AG04449 (cell line): ENCODE measurements at regions of chr11 and their contacts with region 1.

Region 1: GRCh38 chr11:75525596-75526541 is at the start of gene GDPD5:
- DNase-seq: no peak
- H3K4me3 ChIP-seq: peak within 1 kb of the TSS; percentile 80
- CTCF ChIP-seq: peak; percentile 62

Region 2: DNA sequence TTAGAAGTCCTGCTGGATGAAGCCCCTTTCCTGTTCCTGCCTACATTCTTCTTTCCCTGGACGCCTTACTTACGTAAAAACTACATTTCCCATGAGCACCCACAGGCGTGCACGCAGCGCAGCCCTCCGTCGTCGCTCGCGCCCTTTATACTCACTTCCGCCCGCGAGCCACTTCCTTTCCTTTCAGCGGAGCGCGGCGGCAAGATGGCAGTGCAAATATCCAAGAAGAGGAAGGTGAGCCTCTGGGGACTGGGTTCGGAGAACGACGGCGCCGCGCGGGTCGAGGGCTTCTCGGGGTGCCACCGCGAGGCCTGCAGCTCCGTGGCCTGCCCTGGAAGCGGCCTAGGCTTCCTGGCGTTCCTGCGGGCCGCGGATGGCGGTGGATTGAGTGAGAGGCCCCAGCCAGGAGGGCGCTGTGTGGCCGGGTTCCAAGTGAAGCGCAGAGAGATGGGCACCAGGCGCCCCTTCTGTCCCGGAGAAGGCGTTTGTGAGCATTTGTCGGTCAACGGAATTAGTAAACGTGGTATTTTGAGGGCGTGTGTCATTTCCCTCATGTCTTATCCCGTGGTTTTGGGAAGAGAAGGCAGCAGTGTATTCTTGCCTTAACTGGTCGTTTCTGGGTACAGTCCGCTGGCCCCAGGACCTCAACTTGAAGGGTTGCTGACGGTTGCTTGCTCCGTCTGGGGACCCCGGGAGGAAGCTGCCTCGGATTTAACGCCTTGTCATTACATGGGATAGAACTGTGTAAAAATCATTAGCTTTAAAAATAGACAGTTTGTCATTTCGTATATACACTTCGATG is 126.3 kb before region 1 on chr11 and contains the start of gene RPS3:
- CTCF ChIA-PET with region 1: interaction called, 122 read pairs
- POLR2A ChIA-PET with region 1: no interaction called
- DNase-seq: peak; percentile 50
- H3K4me3 ChIP-seq: peak within 1 kb of the TSS; percentile 97
- CTCF ChIP-seq: peak; percentile 6

Region 3: DNA sequence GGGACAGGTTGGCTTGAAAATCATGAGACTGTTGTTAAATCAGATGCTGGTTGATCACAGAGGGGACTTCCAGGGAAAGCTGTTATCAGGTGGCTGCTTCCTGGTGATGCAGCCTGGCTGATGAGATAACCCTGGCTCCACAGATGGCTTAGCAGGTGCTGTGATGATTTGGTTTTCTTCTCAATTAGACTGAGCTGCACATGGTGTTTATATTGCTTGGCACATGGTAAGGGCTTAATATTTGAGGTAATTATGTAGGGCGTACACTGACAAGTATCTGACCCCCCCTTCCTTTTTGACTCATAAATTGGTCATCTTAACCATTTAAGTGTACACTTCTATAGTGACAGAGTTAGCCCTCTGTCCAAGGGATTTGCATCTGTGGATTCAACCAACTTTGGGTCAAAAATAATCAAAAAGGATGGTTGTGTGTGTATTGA is 119.5 kb before region 1 on chr11:
- CTCF ChIA-PET with region 1: interaction called, 122 read pairs
- POLR2A ChIA-PET with region 1: interaction called, 3 read pairs
- DNase-seq: no peak
- H3K4me3 ChIP-seq: no peak overlapping the region
- CTCF ChIP-seq: no peak

Region 4: DNA sequence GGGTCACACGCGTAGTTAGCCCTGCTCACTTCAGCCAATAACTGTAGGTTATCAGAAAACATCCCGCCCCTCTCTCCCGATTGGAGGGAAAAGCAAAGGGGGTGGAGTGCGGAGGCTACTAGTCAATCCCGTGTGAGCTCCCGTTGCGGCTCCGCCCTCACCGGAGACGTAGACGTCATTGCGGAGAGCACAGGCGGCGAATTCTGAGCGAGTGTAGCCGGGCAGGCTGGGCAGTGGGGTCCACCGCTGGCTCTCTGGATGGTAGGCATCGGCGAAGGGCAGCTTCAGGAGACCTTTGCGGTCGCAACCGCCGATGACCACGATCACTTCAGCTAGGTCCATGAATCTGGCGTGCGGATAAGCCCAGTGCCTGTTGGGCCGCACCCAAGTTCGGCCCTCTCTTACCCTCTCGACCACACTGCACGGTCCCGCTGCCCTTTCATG is 97.6 kb before region 1 on chr11:
- CTCF ChIA-PET with region 1: interaction called, 91 read pairs
- POLR2A ChIA-PET with region 1: interaction called, 3 read pairs
- DNase-seq: peak; percentile 21
- H3K4me3 ChIP-seq: peak overlapping the region; percentile 48
- CTCF ChIP-seq: no peak

Region 5: DNA sequence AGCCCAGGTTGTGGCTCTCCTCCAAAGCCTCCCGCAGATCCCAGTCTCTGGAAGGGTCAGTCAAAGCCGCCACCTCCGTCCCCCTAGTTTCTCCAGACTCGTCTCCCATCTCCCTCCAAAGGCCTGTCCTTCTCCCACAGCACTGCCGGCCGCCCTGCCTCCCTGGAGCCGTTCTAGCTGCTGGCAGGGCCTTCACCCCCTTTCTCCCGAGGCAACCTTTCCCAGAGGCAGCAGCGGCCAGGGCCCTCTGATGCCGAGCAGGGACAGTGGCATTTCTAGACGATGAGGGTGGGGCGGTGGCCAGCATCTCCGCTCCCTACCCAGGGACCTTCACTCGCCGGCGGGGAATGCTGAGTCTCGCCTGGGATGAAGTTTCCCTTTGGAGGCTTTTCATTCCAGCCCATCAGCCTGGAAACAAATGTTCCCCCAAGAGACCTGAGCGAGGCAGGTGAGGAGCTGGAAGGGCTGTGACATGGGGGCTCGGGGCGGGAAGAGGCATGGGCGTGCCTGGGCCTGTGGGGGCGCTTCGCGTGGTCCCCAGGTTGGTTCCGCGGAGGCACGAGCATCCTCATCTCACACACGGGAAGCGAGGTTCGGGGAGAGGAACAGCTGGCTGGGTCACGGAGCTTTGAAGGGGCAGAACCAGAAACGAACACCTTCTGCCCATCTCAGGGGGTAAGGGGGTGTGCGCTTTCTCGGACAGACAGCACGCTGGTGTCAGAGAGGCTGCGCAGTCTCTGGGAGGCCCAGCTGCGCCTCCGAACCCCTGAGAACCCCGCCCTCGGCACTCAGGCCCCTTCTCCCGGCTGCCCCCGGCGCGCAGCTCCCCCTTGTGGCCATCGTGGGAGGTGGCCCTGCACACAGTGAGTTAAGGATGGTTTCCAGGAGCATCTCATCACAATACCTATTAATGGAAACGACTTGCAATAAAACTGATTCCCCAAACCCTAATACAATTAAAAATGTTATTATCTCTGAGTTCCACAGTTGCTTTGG is 74.7 kb before region 1 on chr11:
- CTCF ChIA-PET with region 1: interaction called, 658 read pairs
- POLR2A ChIA-PET with region 1: no interaction called
- DNase-seq: no peak
- H3K4me3 ChIP-seq: no peak overlapping the region
- CTCF ChIP-seq: peak; percentile 61

Region 6: GRCh38 chr11:75499449-75500190 is 26.2 kb before region 1 on chr11:
- CTCF ChIA-PET with region 1: interaction called, 12 read pairs
- POLR2A ChIA-PET with region 1: interaction called, 4 read pairs
- DNase-seq: peak; percentile 91
- H3K4me3 ChIP-seq: no peak overlapping the region
- CTCF ChIP-seq: no peak

Region 7: GRCh38 chr11:75508651-75509445 is 17.0 kb before region 1 on chr11:
- CTCF ChIA-PET with region 1: interaction called, 16 read pairs
- POLR2A ChIA-PET with region 1: interaction called, 4 read pairs
- DNase-seq: no peak
- H3K4me3 ChIP-seq: no peak overlapping the region
- CTCF ChIP-seq: no peak